ENCODE measurements at regions of chr3 and their contacts with region 1.

Region 1: DNA sequence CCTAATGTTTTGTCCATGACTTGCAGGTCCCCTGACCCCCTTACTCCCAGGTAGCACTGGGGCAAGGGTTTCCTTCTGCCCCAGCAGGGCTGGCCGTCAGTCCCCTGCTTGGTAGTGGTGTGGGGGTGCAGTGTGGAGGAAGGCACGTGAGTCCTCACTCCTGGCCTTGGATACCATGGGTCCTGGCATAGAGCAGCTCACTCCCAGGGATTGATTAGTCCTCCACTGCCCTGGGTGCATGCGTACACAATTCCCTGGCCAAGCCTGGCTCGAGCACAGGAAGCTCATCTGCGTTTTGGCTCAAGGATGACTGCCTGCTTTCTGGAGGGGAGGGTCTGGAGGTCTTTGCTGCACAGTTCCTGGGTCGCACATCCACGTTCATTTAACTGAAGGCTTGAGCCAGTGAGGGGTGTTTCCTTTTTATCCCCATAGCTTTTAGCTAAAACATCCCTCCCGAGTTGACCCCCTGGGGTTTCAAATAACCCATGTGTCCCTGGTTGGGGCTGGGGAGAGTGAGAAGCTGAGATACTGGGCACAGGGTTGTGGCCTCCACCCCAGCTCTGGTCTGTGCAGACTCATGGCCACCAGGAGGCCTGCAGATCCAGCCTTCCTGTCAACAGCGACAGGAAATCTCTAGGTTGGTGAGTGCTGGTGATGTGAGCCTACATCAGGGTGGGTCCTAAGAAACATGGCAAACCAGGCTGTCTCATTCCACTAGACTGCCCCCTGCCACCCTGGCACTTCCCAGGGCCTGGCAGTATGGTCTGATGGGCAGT is 11.5 kb downstream of the HEMK1 start:
- DNase-seq: no peak
- ATAC-seq: no peak
- H3K4me3 ChIP-seq: no peak overlapping the region
- H3K27ac ChIP-seq: peak overlapping the region; percentile 95 to 99 (median 97)
- H3K4me1 ChIP-seq: peaks cover 50 to 51% of the 10 kb centered on the region in 2 donors
- H3K27me3 ChIP-seq: no peaks in the 10 kb centered on the region
- CTCF ChIP-seq: peak in 1 of 5 experiments; percentile 30
- POLR2A ChIP-seq: no peak

Region 2: DNA sequence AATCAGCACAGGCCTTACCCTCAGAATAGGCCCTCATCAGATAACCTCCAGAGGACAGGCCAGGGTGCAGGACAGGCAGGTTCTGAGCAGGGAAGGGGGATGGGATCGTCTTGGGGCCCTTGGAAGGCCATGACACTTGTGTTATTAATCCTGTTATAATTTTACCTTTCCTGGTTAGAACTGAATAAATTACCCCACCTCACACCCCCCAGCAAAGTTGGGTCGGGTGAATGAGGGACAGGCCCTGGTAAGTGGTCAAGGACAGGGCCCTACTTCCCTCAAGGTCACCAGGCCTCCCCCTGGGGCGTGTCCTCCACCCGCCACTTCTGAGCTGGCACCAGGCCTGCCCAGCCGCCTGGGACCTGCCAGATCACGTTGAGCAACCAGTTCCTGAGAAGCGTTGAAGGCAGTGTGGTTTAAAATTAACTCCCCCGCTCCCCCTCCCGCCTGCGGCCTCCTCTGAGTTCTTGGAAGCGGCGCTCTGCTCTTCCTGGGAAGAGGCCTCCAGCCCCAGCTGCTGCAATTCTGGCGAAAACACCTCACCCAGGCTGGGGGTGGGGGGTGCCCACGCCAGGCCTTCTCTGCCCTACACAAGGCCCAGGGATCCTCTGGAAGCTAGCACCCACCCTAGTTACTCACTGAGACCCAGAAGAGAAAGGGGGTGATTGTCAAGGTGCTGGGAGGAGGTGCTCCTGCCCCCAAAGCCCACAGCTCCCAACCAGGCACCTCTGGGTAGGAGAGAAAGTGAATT is 20.1 kb after region 1 on chr3:
- in situ Hi-C with region 1: no loop called
- intact Hi-C with region 1: loop called (anchors 1 kb)
- DNase-seq: peak; percentile 96 to 99
- ATAC-seq: peak; percentile 75 to 76
- H3K4me3 ChIP-seq: peak overlapping the region in 3 of 4 donors; percentile 5 to 17 (median 10)
- H3K27ac ChIP-seq: peak overlapping the region; percentile 95 to 99 (median 96)
- H3K4me1 ChIP-seq: peaks cover 65 to 67% of the 10 kb centered on the region in 2 donors
- H3K27me3 ChIP-seq: no peaks in the 10 kb centered on the region
- CTCF ChIP-seq: peak in 1 of 5 experiments; percentile 7
- POLR2A ChIP-seq: peak; percentile 55 to 65

Region 3: DNA sequence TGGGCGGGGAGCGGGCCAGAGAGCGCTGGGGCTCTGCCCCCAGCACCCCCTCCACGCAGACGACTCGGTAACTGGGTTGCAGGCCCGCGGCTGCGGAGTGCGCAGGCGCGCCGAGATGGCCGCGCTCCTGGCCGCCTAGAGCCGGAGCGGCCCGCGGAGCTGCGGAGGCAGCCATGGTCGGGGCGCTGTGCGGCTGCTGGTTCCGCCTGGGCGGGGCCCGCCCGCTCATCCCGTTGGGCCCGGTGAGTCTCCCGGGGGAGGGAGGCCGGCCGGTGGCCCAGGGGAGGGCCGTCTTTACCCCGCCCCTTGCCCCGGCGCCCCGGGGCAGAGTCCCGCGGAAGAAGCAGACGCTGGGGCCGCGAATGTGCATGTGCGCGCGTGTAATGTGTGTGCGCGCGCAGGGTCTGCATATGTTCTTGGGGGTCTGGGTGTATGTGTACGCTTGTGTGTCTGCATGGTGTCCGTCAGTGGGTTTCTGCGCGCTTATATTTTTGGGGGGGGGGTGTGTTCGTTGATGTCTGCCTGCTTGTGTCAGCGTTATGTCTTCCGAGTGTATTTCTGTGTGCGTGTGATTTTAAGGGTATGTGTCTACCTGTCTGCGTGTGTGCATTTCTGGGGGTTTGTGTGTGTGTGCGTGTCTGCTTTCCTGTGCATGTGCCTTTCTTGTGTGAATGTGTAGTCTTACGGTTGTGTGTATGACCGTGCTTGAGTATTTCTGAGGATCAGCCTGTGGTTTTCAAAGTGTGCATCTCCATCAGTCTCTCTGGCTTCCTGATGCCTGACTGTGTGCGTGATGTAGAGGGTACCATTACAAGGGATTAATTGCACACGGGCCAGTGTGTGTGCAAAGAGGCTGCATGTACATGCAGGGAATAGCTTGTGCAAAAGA is 1394.3 kb after region 1 on chr3 and contains the start of gene ABHD14A:
- in situ Hi-C with region 1: no loop called
- intact Hi-C with region 1: loop called (anchors 5 kb)
- DNase-seq: peak in 1 of 2 donors; percentile 66
- ATAC-seq: peak; percentile 53 to 59
- H3K4me3 ChIP-seq: peak within 1 kb of the TSS; percentile 77 to 99 (median 84)
- H3K27ac ChIP-seq: peak within 1 kb of the TSS; percentile 96 to 100 (median 99)
- H3K4me1 ChIP-seq: peaks cover 21 to 27% of the 10 kb centered on the region in 2 donors
- H3K27me3 ChIP-seq: no peaks in the 10 kb centered on the region
- CTCF ChIP-seq: no peak
- POLR2A ChIP-seq: peak; percentile 29 to 59
- total RNA-seq, gene ABHD14A: 8.7 to 37.9 (median 29.9) TPM